CD4-positive, alpha-beta memory T cell (primary cell): ENCODE measurements at regions of chr12 and their contacts with region 1.

Region 1: DNA sequence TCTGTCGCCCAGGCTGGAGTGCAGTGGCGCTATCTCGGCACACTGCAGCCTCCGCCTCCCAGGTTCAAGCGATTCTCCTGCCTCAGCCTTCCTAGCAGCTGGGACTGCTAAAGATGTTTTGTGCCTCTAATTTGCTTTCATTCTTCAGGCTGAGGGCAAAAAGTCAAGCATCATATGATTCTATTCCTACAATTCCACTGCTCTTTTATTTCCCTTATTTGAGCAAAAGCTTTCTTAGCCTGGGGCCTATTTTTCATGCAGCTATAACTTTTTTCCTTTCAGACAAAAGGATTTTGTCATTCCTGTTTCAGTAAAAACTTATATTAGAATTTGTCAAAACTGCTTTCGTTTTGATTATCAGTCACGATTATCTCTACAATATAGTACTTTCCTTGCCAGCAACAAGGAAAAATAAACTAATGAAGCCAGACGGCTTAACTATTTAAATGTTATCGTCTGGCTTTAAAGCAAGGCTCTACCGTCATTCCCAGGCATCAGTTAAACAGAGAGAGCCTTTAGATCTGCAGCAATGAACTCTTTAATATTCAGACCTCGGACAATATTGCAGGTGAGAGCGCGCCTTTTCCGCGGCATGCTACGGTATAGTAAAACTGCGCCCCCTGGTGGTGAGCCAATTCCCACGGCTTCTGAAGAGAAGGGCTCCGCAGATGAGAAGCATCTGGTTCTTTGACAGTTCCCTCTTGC is 1.4 kb upstream of the SLC2A13 start:
- DNase-seq: peak; percentile 82 to 84 (median 82)
- H3K4me3 ChIP-seq: peak overlapping the region; percentile 39 to 48
- H3K4me3 Mint-ChIP-seq: peak overlapping the region; percentile 82 to 93 (median 88)
- H3K27ac ChIP-seq: peak overlapping the region; percentile 59
- H3K27ac Mint-ChIP-seq: peak overlapping the region; percentile 53 to 92 (median 74)
- H3K4me1 ChIP-seq: peaks cover 30% of the 10 kb centered on the region
- H3K4me1 Mint-ChIP-seq: peaks cover 19 to 39% (median 29%) of the 10 kb centered on the region in 4 donors
- H3K27me3 ChIP-seq: no peaks in the 10 kb centered on the region
- H3K27me3 Mint-ChIP-seq: peaks cover 3% of the 10 kb centered on the region in 2 donors

Region 2: DNA sequence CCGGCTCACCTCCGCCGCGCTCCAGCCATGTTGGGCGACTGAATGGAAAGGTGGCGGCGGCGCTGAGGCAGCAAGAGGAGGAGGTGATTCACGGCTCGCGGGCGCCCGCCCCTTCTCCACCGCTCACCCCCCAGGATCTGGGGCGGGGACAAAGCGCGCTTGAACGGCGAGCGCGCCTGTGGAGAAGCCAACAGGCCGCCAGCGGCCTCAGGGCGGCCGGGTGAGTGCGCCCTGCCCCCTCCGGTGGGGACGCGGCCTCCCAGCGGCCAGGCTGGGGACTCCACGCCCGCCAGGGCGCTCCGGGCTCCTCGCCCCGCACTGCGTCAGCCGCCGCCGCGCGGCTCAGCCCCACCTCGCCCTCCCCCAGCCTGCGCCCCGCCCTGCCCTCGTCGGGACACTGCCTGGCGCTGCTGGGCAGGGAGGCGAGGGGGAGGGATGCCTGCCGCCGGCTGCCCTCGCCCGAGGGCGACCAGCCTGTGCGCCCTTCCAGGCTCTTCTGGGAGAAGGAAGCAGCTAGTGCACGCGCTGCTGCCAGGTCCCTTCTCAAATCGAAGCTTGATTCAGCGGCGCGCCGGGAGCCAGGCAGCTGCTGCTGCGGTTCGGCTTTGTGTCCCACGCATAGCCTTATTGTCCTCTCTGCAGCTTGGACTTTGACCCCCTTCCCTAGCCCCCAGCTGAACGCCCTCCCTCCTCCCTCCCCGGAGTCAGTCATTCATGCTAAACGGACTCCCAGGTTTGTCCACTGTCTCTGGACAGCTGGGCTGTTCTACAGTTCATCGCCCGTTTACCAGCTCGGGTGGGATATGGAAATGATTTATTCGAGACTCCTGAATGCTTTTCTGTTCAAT is 663.9 kb before region 1 on chr12 and contains the start of gene KIF21A:
- CTCF ChIA-PET with region 1: no interaction called
- POLR2A ChIA-PET with region 1: no interaction called
- intact Hi-C with region 1: loop called (anchors 1 kb)
- DNase-seq: peak; percentile 90 to 93 (median 93)
- H3K4me3 ChIP-seq: peak within 1 kb of the TSS; percentile 50 to 83
- H3K4me3 Mint-ChIP-seq: peak within 1 kb of the TSS; percentile 94 to 98 (median 95)
- H3K27ac ChIP-seq: peak within 1 kb of the TSS; percentile 66
- H3K27ac Mint-ChIP-seq: peak within 1 kb of the TSS; percentile 90 to 99 (median 97)
- H3K4me1 ChIP-seq: peaks cover 13% of the 10 kb centered on the region
- H3K4me1 Mint-ChIP-seq: peaks cover 15 to 33% (median 23%) of the 10 kb centered on the region in 4 donors
- H3K27me3 ChIP-seq: no peaks in the 10 kb centered on the region
- H3K27me3 Mint-ChIP-seq: no peaks in the 10 kb centered on the region
- total RNA-seq, gene KIF21A: 19.1 to 19.9 TPM

Region 3: DNA sequence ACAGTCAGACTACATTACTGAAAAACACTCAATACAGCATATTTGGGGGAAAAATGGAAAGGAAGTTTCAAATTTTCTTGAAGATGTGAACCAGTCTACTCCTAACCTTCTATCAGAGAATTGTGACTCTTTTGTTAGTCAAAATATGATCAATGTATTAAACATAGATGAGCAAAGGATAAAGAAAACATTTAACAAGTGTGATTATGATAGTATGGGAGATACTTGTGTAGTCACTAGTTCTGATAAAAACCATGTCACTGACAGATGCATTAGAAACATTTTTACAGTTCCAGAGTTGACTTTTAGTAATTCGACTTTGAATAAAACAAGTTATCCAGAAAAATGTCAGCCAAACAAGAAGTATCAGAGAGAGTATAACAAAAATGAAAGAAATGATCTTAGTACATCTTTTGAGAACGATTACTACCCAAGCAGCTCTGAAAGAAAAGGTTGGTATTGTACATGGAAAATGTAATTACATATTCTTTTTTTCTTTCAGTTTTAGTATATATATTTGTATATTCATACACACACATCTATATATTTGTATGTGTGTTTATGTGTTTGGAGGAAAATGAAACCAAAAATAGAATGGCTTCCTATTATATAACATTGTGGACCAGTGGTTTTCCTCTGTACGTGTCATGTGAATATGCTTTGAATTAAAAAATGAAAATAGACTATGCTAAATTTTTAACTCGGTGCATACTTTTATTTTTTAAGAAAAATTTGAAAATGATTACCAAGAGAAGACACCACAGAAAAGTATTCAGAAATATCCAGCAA is 424.4 kb before region 1 on chr12:
- CTCF ChIA-PET with region 1: no interaction called
- POLR2A ChIA-PET with region 1: no interaction called
- intact Hi-C with region 1: loop called (anchors 5 kb)
- DNase-seq: peak in 4 of 5 donors; percentile 57 to 73 (median 64)
- H3K4me3 ChIP-seq: peak overlapping the region; percentile 1 to 37
- H3K4me3 Mint-ChIP-seq: peak overlapping the region; percentile 78 to 92 (median 88)
- H3K27ac ChIP-seq: peak overlapping the region; percentile 80
- H3K27ac Mint-ChIP-seq: peak overlapping the region; percentile 86 to 100 (median 98)
- H3K4me1 ChIP-seq: peaks cover 43% of the 10 kb centered on the region
- H3K4me1 Mint-ChIP-seq: peaks cover 30 to 43% (median 37%) of the 10 kb centered on the region in 4 donors
- H3K27me3 ChIP-seq: no peaks in the 10 kb centered on the region
- H3K27me3 Mint-ChIP-seq: no peaks in the 10 kb centered on the region

Region 4: DNA sequence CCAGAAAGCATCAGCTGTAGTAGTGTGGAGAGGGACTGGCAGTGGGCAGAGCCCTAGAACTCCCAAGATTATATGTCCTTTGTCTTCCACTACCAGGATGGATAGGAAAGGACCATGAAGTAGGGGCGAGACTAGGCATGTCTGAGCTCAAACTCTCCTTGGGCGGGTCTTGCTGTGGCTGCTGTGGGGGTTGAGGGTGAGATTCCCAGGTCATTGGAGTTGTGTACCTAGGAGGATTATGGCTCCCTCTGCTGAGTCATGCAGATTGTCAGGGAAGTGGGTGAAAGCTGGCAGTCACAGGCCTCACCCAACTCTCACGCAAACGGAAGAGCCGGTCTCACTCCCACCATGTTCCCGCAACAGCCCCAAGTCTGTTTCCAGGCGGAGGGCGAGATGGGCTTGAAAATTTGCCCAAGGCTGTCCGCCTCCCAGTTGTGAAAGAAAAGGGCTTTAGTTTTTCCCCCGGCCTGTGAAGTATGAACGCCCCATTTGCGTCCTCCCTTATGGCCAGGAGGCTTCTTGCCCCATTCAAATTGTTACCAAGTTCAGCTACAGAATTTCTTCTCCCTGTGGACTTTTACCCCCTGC is 160.8 kb before region 1 on chr12:
- CTCF ChIA-PET with region 1: no interaction called
- POLR2A ChIA-PET with region 1: no interaction called
- intact Hi-C with region 1: no loop called
- DNase-seq: no peak
- H3K4me3 ChIP-seq: no peak overlapping the region
- H3K4me3 Mint-ChIP-seq: no peak overlapping the region
- H3K27ac ChIP-seq: no peak overlapping the region
- H3K27ac Mint-ChIP-seq: no peak overlapping the region
- H3K4me1 ChIP-seq: no peaks in the 10 kb centered on the region
- H3K4me1 Mint-ChIP-seq: no peaks in the 10 kb centered on the region
- H3K27me3 ChIP-seq: no peaks in the 10 kb centered on the region
- H3K27me3 Mint-ChIP-seq: no peaks in the 10 kb centered on the region

Region 5: DNA sequence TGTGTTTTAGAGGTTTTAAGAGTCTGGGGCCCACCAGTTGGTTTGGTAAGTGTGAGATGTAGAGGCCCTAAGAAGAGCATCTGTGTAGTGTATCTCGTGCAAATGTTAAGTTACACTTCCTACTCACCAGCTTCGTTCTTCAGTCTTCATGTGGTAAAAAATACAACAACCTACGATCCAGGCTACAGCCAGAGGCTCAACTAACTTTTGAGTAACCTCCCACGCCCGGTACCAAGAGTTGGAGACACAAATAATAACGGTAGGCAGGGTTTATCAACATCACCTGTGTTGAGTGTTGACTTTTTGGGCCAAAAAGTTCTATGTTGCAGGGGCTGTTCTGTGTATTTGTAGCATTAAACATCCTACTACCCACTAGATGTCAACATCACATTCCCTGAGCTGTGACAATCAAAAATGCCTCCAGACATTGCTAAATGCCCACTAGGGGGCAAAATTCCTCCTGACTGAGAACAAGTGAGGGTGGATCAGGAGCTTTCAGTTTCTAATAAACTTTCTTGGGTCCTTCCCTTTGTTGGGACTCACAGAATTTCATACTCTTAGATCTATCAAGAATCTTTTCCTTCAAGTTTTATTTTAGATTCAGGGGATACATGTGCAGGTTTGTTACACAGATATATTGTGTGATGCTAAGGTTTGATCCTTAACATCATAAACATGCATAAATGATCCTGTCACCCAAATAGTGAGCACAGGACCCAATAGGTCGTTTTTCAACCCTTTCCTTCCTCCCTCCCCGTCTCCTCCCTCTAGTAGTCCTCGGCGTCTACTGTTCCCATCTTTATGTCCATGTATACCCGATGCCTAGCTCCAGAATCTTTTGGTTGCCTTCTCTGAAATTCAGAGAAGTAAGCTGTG is 96.1 kb before region 1 on chr12:
- CTCF ChIA-PET with region 1: interaction called, 185 read pairs
- POLR2A ChIA-PET with region 1: interaction called, 12 read pairs
- intact Hi-C with region 1: loop called (anchors 1 kb)
- DNase-seq: peak; percentile 61 to 67 (median 64)
- H3K4me3 ChIP-seq: peak overlapping the region in 1 of 2 donors; percentile 30
- H3K4me3 Mint-ChIP-seq: peak overlapping the region; percentile 44 to 81 (median 76)
- H3K27ac ChIP-seq: no peak overlapping the region
- H3K27ac Mint-ChIP-seq: peak overlapping the region in 2 of 7 donors; percentile 23 to 26
- H3K4me1 ChIP-seq: peaks cover 6% of the 10 kb centered on the region
- H3K4me1 Mint-ChIP-seq: peaks cover 10 to 14% (median 10%) of the 10 kb centered on the region in 4 donors
- H3K27me3 ChIP-seq: no peaks in the 10 kb centered on the region
- H3K27me3 Mint-ChIP-seq: no peaks in the 10 kb centered on the region

Region 6: DNA sequence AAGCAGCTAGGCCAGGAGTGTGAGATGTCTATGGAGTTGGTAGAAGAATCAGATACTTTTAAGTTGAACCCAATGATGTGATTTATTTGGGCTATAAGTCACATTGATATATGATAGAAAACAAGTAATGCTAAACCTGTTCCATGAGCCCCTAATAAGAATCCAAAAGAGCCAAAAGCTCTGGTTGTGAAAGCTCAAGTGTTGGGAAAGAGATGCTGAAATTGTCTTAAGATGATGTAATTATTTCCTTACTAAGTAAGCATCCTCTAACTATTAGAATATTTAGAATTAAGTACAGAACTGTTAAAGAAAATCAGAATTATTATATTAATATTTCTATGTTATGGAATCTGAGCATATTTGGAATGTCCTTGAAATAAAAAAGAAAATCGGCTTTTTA is 16.2 kb after region 1 on chr12:
- CTCF ChIA-PET with region 1: interaction called, 50 read pairs
- POLR2A ChIA-PET with region 1: interaction called, 3 read pairs
- intact Hi-C with region 1: no loop called
- DNase-seq: no peak
- H3K4me3 ChIP-seq: no peak overlapping the region
- H3K4me3 Mint-ChIP-seq: no peak overlapping the region
- H3K27ac ChIP-seq: no peak overlapping the region
- H3K27ac Mint-ChIP-seq: no peak overlapping the region
- H3K4me1 ChIP-seq: no peaks in the 10 kb centered on the region
- H3K4me1 Mint-ChIP-seq: no peaks in the 10 kb centered on the region
- H3K27me3 ChIP-seq: no peaks in the 10 kb centered on the region
- H3K27me3 Mint-ChIP-seq: peaks cover 0 to 3% of the 10 kb centered on the region in 2 donors